ENCODE measurements at regions of chr5 and their contacts with region 1.

Region 1: DNA sequence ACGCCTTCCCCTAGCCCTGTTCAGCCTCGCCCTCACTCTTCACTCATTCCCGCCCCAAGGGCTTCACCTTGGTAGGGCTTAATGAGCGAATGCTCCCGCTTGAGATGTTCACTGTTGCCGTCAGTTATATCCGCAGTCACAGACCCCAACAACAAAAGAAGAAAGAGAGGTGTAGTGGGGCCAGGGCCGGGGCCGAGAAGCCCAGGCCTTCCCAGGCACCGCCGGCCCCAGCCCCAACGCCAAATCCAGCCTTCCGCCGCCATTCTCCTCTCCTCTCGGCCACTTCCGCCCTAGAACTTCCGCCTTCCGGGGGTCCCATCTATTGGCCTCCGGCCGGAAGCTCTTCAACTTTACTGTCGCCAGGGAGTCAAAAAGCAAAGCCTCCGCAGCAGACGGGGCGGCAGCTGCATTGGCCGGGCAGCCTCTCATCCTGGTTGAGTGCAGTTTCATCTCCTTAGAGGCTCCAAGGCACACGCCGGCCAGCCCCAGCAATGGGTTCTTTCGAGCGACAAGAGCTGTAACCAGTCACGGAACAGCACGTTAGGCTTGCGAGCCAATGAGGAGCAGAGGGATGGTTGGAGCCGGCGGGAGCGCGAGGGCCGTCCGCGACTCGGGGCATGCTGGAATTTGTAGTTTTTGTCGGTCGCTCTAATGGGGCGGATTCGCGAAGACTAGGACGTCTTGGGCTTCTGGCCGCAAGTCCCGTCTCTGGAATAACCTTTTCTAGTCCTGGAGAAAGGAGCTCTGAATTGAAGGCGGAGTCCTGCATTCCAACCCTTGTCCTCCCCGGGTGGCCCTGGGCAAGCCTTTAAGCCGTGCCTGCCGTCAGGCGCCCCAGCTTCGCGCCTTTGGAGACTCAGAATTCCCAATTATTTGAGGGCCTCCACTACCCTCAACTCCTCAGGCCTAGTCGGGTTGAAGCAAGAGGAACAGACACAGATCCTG is at the start of gene LMAN2:
- DNase-seq: peak; percentile 74 to 95 (median 93)
- ATAC-seq: peak; percentile 99
- H3K4me3 ChIP-seq: peak within 1 kb of the TSS; percentile 91
- H3K4me3 Mint-ChIP-seq: peak within 1 kb of the TSS; percentile 93 to 99 (median 98)
- H3K27ac ChIP-seq: peak within 1 kb of the TSS; percentile 95
- H3K27ac Mint-ChIP-seq: peak within 1 kb of the TSS; percentile 93 to 100 (median 99)
- H3K4me1 ChIP-seq: peaks cover 31 to 46% of the 10 kb centered on the region in 2 donors
- H3K4me1 Mint-ChIP-seq: peaks cover 56 to 79% (median 69%) of the 10 kb centered on the region in 7 donors
- H3K27me3 ChIP-seq: no peaks in the 10 kb centered on the region
- H3K27me3 Mint-ChIP-seq: no peaks in the 10 kb centered on the region
- total RNA-seq, gene LMAN2: 71.8 to 144 (median 99.7) TPM

Region 2: DNA sequence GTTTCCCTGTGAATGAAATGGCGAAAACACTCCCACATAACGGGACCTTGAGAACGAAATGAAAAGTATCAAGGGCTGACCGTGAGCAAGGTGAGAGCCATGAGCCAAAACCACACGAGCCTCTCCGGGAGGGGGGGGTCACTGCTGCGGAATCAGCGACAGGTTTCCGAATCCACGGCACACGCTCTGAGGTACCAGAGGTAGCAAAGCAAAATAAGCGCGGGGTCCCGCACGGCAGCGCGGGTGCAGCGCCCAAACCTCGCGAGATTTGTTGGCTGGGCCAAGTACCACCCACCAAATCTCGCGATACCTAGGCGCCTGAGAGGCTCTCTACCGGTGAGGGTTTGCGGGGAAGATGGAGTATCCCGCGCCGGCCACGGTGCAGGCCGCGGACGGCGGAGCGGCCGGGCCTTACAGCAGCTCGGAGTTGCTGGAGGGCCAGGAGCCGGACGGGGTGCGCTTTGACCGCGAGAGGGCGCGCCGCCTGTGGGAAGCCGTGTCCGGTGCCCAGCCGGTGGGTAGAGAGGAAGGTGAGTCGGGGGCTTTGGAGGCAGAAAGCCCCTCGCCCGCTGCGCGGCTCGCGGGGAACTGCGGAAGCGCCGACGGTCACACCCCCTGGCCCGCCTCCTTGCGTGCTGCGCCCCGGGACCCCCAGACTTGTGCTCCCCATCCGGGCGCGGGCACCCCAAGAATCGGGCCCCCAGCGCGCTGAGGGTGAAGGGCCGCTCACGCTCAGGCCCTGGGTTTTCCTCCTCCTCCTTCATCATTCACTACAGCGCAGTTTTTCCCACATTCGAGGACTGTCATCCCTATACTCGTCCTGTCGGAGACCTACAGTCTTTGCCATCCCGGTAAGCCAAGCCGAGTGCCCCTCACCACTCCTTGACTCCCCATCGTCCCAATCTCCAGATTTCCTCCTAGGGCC is 329.0 kb before region 1 on chr5 and contains the start of gene ZNF346:
- CTCF ChIA-PET with region 1: no interaction called
- POLR2A ChIA-PET with region 1: no interaction called
- intact Hi-C with region 1: loop called in 1 of 2 experiments (anchors 5 kb)
- DNase-seq: peak; percentile 80 to 93 (median 91)
- ATAC-seq: peak; percentile 98
- H3K4me3 ChIP-seq: peak within 1 kb of the TSS; percentile 62
- H3K4me3 Mint-ChIP-seq: peak within 1 kb of the TSS; percentile 97 to 100 (median 99)
- H3K27ac ChIP-seq: peak within 1 kb of the TSS; percentile 91
- H3K27ac Mint-ChIP-seq: peak within 1 kb of the TSS; percentile 95 to 99 (median 98)
- H3K4me1 ChIP-seq: peaks cover 15 to 16% of the 10 kb centered on the region in 2 donors
- H3K4me1 Mint-ChIP-seq: peaks cover 28 to 57% (median 45%) of the 10 kb centered on the region in 7 donors
- H3K27me3 ChIP-seq: no peaks in the 10 kb centered on the region
- H3K27me3 Mint-ChIP-seq: no peaks in the 10 kb centered on the region
- total RNA-seq, gene ZNF346: 18.1 to 28.2 (median 24.0) TPM

Region 3: DNA sequence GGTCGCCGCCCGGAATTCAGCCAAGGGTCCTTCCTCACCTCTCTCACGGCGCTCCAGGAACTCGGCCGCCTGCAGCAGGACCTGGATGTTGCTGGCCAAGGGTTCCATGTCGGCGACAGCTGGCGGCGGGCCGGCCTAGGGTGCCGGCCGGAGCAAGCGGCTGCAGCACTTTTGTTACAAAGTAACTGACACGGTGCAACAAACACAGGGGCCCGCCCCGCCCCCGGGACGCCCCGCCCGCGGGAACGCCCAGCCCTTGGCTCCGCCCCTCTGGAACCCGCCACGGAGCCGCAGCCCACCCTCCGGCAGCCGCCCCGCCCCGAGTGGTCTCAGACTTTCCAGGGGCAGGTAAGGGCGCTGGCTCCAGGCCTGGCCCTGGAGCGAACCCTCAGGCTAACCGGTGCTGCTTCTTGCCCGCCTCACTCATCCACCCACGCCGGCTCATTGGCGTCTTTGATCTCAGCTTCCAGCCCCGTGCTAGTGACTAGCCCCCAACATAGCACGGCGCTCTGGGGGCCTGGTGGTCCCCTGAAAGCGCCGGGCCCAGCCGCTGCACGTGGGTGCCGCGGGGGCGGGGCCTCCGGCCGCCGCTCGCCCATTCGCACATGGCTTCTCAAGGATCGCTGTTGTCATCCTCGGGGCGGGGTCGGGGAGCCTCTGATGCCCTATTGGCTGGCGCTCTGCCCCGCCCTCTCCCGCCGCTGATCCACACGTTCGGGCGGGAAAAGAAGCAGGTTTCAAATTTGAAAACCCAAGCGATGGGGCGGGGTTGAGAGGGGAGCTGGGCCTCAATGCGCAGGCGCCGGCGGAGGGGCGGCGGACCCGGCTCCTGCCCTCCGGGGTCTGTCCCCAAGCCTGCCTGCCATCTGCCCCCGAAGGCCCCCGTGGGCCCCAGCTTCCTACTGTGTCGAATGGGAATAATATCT is 39.7 kb before region 1 on chr5 and contains the start of gene MXD3:
- CTCF ChIA-PET with region 1: interaction called, 4 read pairs
- POLR2A ChIA-PET with region 1: interaction called, 3 read pairs
- intact Hi-C with region 1: loop called (anchors 1 kb)
- DNase-seq: peak; percentile 87 to 97 (median 92)
- ATAC-seq: peak; percentile 95
- H3K4me3 ChIP-seq: peak within 1 kb of the TSS; percentile 77
- H3K4me3 Mint-ChIP-seq: peak within 1 kb of the TSS; percentile 78 to 93 (median 84)
- H3K27ac ChIP-seq: peak within 1 kb of the TSS; percentile 51
- H3K27ac Mint-ChIP-seq: peak within 1 kb of the TSS in 6 of 9 donors; percentile 42 to 92 (median 59)
- H3K4me1 ChIP-seq: peaks cover 21 to 22% of the 10 kb centered on the region in 2 donors
- H3K4me1 Mint-ChIP-seq: peaks cover 11 to 49% (median 32%) of the 10 kb centered on the region in 7 donors
- H3K27me3 ChIP-seq: no peaks in the 10 kb centered on the region
- H3K27me3 Mint-ChIP-seq: peaks cover 0 to 5% (median 0%) of the 10 kb centered on the region in 5 donors
- total RNA-seq, gene MXD3: 8.8 to 39.8 (median 18.3) TPM

Region 4: DNA sequence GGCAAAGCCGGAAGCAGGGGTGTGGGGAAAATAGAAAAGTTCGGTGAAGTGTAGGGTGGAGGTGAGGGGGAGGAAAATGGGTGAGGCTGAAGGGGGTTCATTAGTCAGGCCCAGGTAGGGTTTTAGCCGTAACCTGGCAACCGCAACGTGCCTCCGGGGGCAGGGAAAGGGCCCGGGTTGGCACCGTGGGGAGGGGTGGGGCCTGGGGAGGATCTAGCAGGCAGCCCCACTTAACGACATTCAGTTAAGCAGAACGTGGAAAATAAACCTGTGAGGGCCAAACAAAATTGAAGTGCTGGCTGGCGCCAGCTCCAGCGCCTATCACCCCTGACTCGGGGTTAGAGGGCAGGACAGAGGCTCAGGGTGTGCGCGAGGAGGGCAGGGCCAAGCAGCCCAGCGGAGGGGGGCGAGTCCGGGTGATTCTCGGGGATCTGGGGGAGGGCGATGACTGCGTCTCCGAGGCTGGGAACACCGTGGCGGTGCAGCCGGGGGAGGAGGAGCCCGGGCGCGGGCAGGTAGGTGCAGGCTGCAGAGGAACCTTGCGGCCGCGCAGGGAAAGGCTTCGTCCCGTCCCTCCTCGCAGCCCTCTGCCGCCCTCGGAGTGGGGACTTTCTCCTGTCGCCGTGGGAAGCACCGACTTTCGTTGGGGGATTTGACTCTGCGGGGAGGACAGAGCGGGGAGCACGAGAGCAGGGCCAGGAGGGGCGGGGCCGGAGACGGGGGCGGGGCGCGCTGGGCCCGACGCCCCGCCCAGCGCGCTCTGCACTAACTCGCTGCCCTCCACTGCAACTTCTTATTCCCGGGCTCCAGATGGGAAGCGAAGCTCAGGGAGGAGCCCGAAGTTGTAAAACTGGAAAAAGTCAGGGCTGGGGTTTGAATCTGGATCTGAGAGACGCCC is 11.2 kb after region 1 on chr5:
- CTCF ChIA-PET with region 1: interaction called, 5 read pairs
- POLR2A ChIA-PET with region 1: interaction called, 28 read pairs
- intact Hi-C with region 1: loop called in 1 of 2 experiments (anchors 1 kb)
- DNase-seq: peak; percentile 32 to 79 (median 55)
- ATAC-seq: peak; percentile 80
- H3K4me3 ChIP-seq: peak overlapping the region; percentile 61
- H3K4me3 Mint-ChIP-seq: peak overlapping the region; percentile 83 to 97 (median 90)
- H3K27ac ChIP-seq: peak overlapping the region; percentile 88
- H3K27ac Mint-ChIP-seq: peak overlapping the region; percentile 82 to 94 (median 91)
- H3K4me1 ChIP-seq: peaks cover 53 to 61% of the 10 kb centered on the region in 2 donors
- H3K4me1 Mint-ChIP-seq: peaks cover 42 to 78% (median 64%) of the 10 kb centered on the region in 7 donors
- H3K27me3 ChIP-seq: no peaks in the 10 kb centered on the region
- H3K27me3 Mint-ChIP-seq: no peaks in the 10 kb centered on the region

Region 5: DNA sequence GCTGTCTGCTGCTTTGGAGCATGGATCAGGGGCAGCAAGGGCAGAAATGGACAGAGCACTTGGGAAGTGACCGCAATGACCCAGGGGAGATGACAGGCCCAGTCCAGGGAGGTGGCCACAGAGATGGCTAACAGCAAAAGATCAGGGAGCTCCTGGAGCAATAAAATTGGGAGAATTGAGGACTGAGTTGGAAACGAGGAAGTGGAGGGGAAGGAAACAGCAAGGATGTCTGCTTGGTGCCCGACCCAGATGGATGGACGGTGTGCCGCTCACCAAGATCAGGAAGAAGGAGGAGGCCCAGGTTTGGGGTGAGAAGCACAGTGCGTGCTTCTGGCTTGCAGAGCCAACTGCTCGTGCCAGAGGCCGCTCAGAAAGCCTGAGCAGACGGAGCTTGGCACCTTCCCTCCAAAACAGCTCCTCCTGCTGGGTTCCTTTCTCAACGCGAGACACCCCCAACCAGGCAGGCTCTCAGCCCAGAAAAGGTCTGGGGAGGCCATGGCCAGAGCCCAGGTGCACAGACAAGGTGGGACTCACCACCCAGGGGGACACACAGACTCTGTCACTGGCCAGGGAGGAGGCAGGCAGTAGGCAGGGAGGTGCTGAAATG is 30.9 kb after region 1 on chr5:
- CTCF ChIA-PET with region 1: interaction called, 4 read pairs
- POLR2A ChIA-PET with region 1: interaction called, 4 read pairs
- intact Hi-C with region 1: loop called in 1 of 2 experiments (anchors 1 kb)
- DNase-seq: peak in 7 of 9 donors; percentile 48 to 72 (median 60)
- ATAC-seq: peak; percentile 66
- H3K4me3 ChIP-seq: no peak overlapping the region
- H3K4me3 Mint-ChIP-seq: peak overlapping the region in 8 of 10 donors; percentile 5 to 76 (median 42)
- H3K27ac ChIP-seq: no peak overlapping the region
- H3K27ac Mint-ChIP-seq: peak overlapping the region in 7 of 9 donors; percentile 23 to 86 (median 66)
- H3K4me1 ChIP-seq: peaks cover 6 to 14% of the 10 kb centered on the region in 2 donors
- H3K4me1 Mint-ChIP-seq: peaks cover 24 to 54% (median 37%) of the 10 kb centered on the region in 7 donors
- H3K27me3 ChIP-seq: no peaks in the 10 kb centered on the region
- H3K27me3 Mint-ChIP-seq: peaks cover 0 to 4% (median 0%) of the 10 kb centered on the region in 5 donors